Keratinocyte (primary cell): ENCODE measurements at regions of chr10 and their contacts with region 1.

Region 1: GRCh38 chr10:73625884-73626752 is 15.2 kb downstream of the MYOZ1 start:
- DNase-seq: peak; percentile 87
- H3K4me3 ChIP-seq: peak overlapping the region; percentile 67 to 96 (median 76)
- H3K27ac ChIP-seq: peak overlapping the region; percentile 95
- H3K4me1 ChIP-seq: peaks cover 3% of the 10 kb centered on the region
- H3K27me3 ChIP-seq: no peaks in the 10 kb centered on the region
- CTCF ChIP-seq: no peak

Region 2: GRCh38 chr10:73537288-73537687 is 88.8 kb before region 1 on chr10:
- dilution Hi-C with region 1: loop called (anchors 10 kb)
- DNase-seq: no peak
- H3K4me3 ChIP-seq: no peak overlapping the region
- H3K27ac ChIP-seq: no peak overlapping the region
- H3K4me1 ChIP-seq: no peaks in the 10 kb centered on the region
- H3K27me3 ChIP-seq: no peaks in the 10 kb centered on the region
- CTCF ChIP-seq: no peak

Region 3: DNA sequence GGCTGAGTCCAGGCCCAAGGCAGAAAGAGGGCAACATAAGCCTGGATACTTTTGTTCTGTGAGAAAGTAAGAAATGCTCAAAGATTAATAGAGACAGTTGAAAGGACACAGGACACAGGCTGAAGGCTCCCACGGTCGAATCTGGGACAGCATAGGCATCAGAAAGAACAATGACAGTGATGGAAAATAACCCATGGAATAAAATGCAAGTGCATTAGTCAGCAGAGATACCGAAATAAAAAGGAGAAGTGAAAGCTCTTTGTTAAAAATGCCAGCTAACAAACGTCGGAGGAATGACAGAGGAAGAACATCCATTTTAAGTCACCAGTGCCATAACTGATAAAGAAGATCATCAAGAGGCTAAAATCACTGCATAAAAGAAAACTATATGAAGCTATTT is 91.4 kb after region 1 on chr10:
- dilution Hi-C with region 1: no loop called
- DNase-seq: no peak
- H3K4me3 ChIP-seq: no peak overlapping the region
- H3K27ac ChIP-seq: no peak overlapping the region
- H3K4me1 ChIP-seq: no peaks in the 10 kb centered on the region
- H3K27me3 ChIP-seq: no peaks in the 10 kb centered on the region
- CTCF ChIP-seq: no peak